MCF 10A (cell line): ENCODE measurements at regions of chr5 and their contacts with region 1.

Region 1: DNA sequence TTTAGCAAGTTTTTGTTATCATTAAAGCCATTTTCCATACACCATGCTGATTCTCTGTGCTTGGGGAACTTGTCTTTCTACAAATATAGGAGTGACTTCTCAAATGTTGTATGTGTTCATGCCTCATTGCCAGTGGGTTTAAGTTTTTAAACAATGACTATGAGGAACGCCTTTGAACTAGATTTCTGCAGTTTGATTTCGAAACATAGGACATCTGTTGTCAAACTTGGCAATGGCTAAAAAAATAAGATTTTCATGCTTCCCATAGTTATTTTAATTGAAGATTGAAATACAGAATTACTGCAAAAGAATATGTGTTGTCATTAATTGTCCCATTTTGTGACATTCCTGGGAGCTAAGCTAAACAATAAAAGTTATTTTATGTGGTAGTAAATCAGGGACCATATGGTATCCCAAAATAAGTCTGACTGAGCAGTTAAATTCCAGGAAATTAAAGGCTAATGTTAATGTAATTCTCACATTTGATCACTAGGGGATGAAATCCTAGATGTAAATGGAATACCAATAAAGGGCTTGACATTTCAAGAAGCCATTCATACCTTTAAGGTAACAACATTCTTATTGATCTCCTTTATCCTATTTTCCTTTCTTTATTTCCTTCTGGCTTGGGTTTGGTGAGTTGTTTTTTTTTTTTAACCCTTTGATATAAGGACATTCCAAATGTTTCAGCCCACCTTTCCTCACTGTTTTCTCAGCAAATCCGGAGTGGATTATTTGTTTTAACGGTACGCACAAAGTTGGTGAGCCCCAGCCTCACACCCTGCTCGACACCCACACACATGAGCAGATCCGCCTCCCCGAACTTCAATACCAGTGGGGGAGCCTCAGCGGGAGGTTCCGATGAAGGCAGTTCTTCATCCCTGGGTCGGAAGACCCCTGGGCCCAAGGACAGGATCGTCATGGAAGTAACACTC is 116.7 kb downstream of the GOLPH3 start:
- DNase-seq: peak; percentile 53
- H3K4me3 Mint-ChIP-seq: no peak overlapping the region
- H3K27ac Mint-ChIP-seq: peak overlapping the region; percentile 88
- H3K4me1 Mint-ChIP-seq: peaks cover 28% of the 10 kb centered on the region
- H3K27me3 Mint-ChIP-seq: no peaks in the 10 kb centered on the region
- CTCF ChIP-seq: peak; percentile 31

Region 2: GRCh38 chr5:31987985-31988710 is 69.3 kb before region 1 on chr5:
- CTCF ChIA-PET with region 1: no interaction called
- POLR2A ChIA-PET with region 1: interaction called, 3 read pairs
- intact Hi-C with region 1: loop called (anchors 5 kb)
- DNase-seq: peak; percentile 98
- H3K4me3 Mint-ChIP-seq: no peak overlapping the region
- H3K27ac Mint-ChIP-seq: peak overlapping the region; percentile 20
- H3K4me1 Mint-ChIP-seq: peaks cover 36% of the 10 kb centered on the region
- H3K27me3 Mint-ChIP-seq: no peaks in the 10 kb centered on the region
- CTCF ChIP-seq: no peak